Dorsolateral prefrontal cortex (tissue), 120 donors: ENCODE measurements at regions of chr1 and their contacts with region 1.

Region 1: DNA sequence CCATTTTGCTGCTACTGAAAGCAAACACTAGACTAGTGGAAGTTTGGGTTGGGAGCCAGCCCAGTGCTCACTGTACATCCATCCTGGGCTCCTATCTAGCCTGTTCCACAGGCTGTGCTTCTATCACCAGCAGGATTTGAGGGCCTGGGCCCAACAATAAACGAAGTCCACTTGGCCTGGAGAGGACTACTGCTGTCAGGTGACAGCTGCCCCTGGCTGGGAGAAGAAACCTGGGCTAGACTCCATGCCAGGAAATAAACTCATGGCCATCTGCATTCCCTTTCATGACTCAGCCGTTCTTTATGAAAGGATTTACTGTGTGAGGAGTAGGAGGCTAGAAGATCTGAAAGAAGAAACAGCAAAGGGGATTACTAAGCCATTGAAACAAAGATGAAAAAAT is 35.5 kb downstream of the COLGALT2 start:
- DNase-seq: peak in 8 of 10 donors; percentile 42 to 87 (median 62)
- H3K4me3 ChIP-seq: peak overlapping the region in 3 of 59 donors; percentile 9 to 11 (median 10)
- H3K27ac ChIP-seq: peak overlapping the region; percentile 11 to 95 (median 85)
- H3K27me3 ChIP-seq: no peaks in the 10 kb centered on the region
- CTCF ChIP-seq: peak in 1 of 56 donors; percentile 25

Region 2: GRCh38 chr1:184555665-184556641 is 553.9 kb after region 1 on chr1:
- intact Hi-C with region 1: loop called in 1 of 2 experiments (anchors 5 kb)
- DNase-seq: peak in 1 of 10 donors; percentile 78
- H3K4me3 ChIP-seq: no peak overlapping the region
- H3K27ac ChIP-seq: peak overlapping the region in 1 of 59 donors; percentile 62
- H3K27me3 ChIP-seq: no peaks in the 10 kb centered on the region
- CTCF ChIP-seq: no peak